ENCODE measurements at regions of chr17 and their contacts with region 1.

Region 1: DNA sequence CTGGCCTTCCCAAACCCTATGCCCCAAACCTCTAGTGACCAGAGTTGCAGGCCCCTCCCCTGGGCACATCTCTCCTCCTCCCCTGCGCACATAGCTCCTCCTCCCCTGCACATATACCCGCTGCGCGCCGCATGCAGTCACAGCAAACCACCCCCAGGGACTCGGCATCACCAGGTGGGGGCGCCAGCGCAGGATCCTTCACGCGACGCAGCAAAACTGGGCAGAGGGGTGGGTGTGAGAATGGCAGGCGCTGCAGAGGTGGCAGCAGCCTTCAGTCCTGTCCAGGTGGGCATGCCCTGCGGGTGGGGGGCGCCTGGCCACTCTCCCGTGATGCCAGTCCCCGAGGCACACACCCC is 5.6 kb downstream of the CORO6 start:
- DNase-seq: no peak
- ATAC-seq: peak; percentile 82
- H3K4me3 ChIP-seq: peak overlapping the region; percentile 67; the same call in 1 of the 2 replicates
- H3K27ac ChIP-seq: no peak overlapping the region; the same call in 1 of the 2 replicates
- H3K4me1 ChIP-seq: peaks cover 38% of the 10 kb centered on the region
- H3K27me3 ChIP-seq: peaks cover 4 to 6% of the 10 kb centered on the region in 2 experiments; a peak in 3 of 4 replicates
- CTCF ChIP-seq: peak; percentile 76 to 94 (median 93)
- EP300 ChIP-seq: no peak
- POLR2A ChIP-seq: peak; percentile 70
- RAD21 ChIP-seq: peak; percentile 47

Region 2: DNA sequence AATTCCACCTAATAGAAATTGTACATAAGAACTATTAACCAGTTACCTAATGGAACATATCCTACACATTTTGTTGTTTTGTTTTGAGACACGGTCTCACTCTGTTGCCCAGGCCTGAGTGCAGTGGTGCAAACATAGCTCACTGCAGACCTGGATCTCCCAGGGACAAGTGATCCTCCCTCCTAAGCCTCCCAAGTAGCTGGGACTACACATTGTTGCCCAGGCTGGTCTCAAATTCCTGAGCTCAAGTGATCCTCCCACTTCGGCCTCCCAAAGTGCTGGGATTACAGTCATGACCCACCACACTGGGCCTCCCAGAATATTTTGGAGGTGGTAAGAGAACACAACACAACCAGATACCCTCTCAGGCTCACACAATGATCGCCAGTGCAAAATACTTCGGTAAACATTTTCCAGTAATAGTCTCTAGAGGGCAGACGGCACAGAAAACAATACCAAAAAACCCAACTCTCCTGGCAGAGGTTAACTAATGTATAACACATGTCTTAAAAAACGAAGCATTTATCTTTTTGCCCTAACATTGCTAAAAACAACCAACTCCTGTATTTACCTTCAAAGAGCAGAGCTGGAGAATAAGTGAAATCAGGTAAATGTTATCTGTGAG is 333.7 kb before region 1 on chr17:
- CTCF ChIA-PET with region 1: no interaction called
- POLR2A ChIA-PET with region 1: no interaction called
- RAD21 ChIA-PET with region 1: no interaction called
- SMC1A ChIA-PET with region 1: no interaction called
- in situ Hi-C with region 1: no loop called
- intact Hi-C with region 1: no loop called
- DNase-seq: no peak
- ATAC-seq: peak; percentile 53
- H3K4me3 ChIP-seq: 0 out of 2 replicates have a peak overlapping the region, but pooled peaks have one; percentile 22
- H3K27ac ChIP-seq: no peak overlapping the region
- H3K4me1 ChIP-seq: no peaks in the 10 kb centered on the region
- H3K27me3 ChIP-seq: no peaks in the 10 kb centered on the region
- CTCF ChIP-seq: no peak
- EP300 ChIP-seq: no peak
- POLR2A ChIP-seq: no peak
- RAD21 ChIP-seq: no peak

Region 3: DNA sequence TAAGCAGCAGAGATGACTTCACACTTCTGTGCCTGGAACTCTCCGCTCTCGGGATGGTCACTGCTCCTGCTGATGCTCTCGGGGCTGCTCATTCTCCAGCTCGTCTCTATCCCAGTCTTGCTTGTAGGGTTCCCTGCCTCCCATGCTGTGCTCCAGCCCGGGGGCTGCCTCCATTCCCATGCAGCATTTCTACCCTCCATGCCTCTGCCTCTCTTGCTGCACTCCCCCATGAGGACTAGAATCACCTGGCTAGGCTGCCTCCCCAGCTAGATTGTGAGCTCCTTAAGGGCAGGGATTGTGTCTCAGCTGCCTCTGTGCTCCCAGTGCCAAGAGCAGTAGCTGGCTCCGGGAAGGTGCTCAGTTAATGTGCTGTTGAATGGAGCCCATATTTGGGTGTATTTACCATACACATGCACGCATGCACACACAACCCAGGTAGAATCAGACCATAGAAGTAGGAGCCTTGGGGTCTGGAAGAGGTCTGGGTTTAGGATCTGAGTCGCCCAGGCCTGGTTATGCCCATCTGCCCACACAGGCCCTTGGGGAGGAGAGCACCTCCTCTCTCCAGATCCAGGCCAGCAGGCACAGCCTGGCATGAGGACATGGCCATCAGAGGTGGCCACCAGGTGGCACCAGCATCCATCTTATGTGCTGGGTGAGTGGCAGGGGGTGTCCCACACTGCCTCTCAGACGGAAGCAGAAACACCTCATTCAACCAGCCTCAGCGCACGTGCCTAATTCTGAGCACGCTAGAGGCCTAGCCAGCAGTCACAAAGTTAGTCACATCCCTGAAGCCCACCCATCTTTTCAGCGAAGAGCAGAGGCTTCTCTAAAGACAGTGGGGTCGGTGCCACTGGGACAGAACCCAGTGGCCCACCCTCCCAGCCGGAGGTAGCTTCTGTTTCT is 37.0 kb before region 1 on chr17:
- CTCF ChIA-PET with region 1: interaction called, 82 read pairs
- POLR2A ChIA-PET with region 1: interaction called, 3 read pairs
- RAD21 ChIA-PET with region 1: interaction called, 25 read pairs
- SMC1A ChIA-PET with region 1: interaction called, 8 read pairs
- in situ Hi-C with region 1: no loop called
- intact Hi-C with region 1: loop called (anchors 1 kb)
- DNase-seq: no peak
- ATAC-seq: peak; percentile 100
- H3K4me3 ChIP-seq: no peak overlapping the region
- H3K27ac ChIP-seq: no peak overlapping the region; the same call in 1 of the 2 replicates
- H3K4me1 ChIP-seq: peaks cover 11% of the 10 kb centered on the region
- H3K27me3 ChIP-seq: no peaks in the 10 kb centered on the region
- CTCF ChIP-seq: peak; percentile 82 to 93 (median 89)
- EP300 ChIP-seq: no peak
- POLR2A ChIP-seq: no peak
- RAD21 ChIP-seq: peak; percentile 87

Region 4: DNA sequence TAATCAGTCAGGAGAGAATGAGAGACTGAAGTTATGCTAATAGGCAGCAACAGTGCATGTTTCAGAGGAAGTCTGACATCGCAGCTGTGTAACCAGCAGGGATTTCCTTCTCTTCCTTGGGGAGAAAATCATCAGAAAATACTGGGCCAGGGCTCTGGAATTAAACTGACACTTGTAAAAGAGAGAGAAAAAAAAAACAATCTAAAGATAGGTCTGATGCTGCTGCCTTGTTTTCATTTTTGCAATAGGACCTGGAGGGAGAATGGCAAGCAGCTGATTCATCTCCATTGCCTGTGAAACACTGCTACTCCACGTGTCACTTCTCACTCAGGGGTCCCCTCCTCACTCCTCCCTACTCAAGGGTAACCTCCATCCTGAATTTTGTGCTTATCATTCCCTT is 23.3 kb after region 1 on chr17:
- CTCF ChIA-PET with region 1: interaction called, 28 read pairs
- POLR2A ChIA-PET with region 1: interaction called, 5 read pairs
- RAD21 ChIA-PET with region 1: interaction called, 22 read pairs
- SMC1A ChIA-PET with region 1: interaction called, 5 read pairs
- in situ Hi-C with region 1: no loop called
- intact Hi-C with region 1: no loop called
- DNase-seq: no peak
- ATAC-seq: no peak
- H3K4me3 ChIP-seq: no peak overlapping the region
- H3K27ac ChIP-seq: no peak overlapping the region
- H3K4me1 ChIP-seq: peaks cover 3% of the 10 kb centered on the region
- H3K27me3 ChIP-seq: no peaks in the 10 kb centered on the region
- CTCF ChIP-seq: no peak
- EP300 ChIP-seq: no peak
- POLR2A ChIP-seq: no peak
- RAD21 ChIP-seq: no peak

Region 5: GRCh38 chr17:29705386-29705785 is 88.3 kb after region 1 on chr17:
- CTCF ChIA-PET with region 1: interaction called, 15 read pairs
- POLR2A ChIA-PET with region 1: no interaction called
- RAD21 ChIA-PET with region 1: interaction called, 13 read pairs
- SMC1A ChIA-PET with region 1: interaction called, 3 read pairs
- in situ Hi-C with region 1: no loop called
- intact Hi-C with region 1: no loop called
- DNase-seq: no peak
- ATAC-seq: peak; percentile 7; the same call in 2 of the 3 replicates
- H3K4me3 ChIP-seq: peak overlapping the region; percentile 43; the same call in 1 of the 2 replicates
- H3K27ac ChIP-seq: peak overlapping the region; percentile 91
- H3K4me1 ChIP-seq: peaks cover 29% of the 10 kb centered on the region
- H3K27me3 ChIP-seq: no peaks in the 10 kb centered on the region
- CTCF ChIP-seq: no peak
- EP300 ChIP-seq: no peak
- POLR2A ChIP-seq: no peak
- RAD21 ChIP-seq: no peak

Region 6: GRCh38 chr17:29760761-29761696 is 143.9 kb after region 1 on chr17:
- CTCF ChIA-PET with region 1: interaction called, 10 read pairs
- POLR2A ChIA-PET with region 1: no interaction called
- RAD21 ChIA-PET with region 1: interaction called, 5 read pairs
- SMC1A ChIA-PET with region 1: interaction called, 3 read pairs
- in situ Hi-C with region 1: no loop called
- intact Hi-C with region 1: no loop called
- DNase-seq: peak; percentile 55
- ATAC-seq: peak; percentile 92
- H3K4me3 ChIP-seq: peak overlapping the region; percentile 88
- H3K27ac ChIP-seq: peak overlapping the region; percentile 90
- H3K4me1 ChIP-seq: peaks cover 11% of the 10 kb centered on the region; the same call in 1 of the 2 replicates
- H3K27me3 ChIP-seq: no peaks in the 10 kb centered on the region
- CTCF ChIP-seq: no peak
- EP300 ChIP-seq: 0 out of 4 replicates have a peak, but pooled peaks of 1 of the 2 experiments have one; percentile 4
- POLR2A ChIP-seq: peak; percentile 91
- RAD21 ChIP-seq: no peak

Region 7: DNA sequence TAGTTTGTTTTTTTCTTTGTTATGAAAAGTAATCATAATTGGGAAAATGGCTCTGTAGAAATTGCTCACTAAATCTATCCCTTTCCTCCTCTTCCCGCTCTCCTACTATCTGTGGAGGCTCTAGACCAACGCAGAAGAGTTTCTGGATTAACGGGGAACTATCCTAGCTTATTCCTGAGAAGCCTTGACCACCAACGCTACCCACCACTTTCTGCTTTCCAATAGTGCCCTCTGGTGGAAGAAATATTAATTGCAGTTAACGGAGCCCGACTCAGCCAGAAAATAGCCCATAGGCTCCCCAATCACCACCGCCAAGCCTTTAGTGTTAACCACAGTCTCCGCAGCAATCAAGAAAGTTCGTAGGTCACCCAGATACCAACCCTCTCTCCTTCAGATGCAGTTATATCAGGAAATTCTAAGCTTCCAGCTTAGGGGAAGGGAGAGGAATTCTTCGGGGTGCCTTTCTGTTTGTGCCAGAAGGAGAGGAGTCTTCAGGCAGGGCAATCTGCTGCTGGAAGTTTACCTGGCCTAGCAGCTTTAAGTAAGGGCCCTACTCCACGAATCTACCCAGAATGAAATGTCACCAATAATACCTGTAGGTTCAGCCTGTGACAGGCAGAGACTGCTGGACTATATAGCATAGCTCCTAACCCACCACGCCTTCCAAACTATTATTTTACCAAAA is 476.5 kb after region 1 on chr17:
- CTCF ChIA-PET with region 1: interaction called, 10 read pairs
- POLR2A ChIA-PET with region 1: no interaction called
- RAD21 ChIA-PET with region 1: interaction called, 4 read pairs
- SMC1A ChIA-PET with region 1: no interaction called
- in situ Hi-C with region 1: no loop called
- intact Hi-C with region 1: no loop called
- DNase-seq: peak; percentile 32
- ATAC-seq: peak; percentile 88
- H3K4me3 ChIP-seq: no peak overlapping the region
- H3K27ac ChIP-seq: no peak overlapping the region
- H3K4me1 ChIP-seq: peaks cover 3% of the 10 kb centered on the region; the same call in 1 of the 2 replicates
- H3K27me3 ChIP-seq: no peaks in the 10 kb centered on the region; a peak in 1 of 4 replicates
- CTCF ChIP-seq: peak; percentile 63 to 82 (median 70); a peak in 5 of 6 replicates
- EP300 ChIP-seq: no peak
- POLR2A ChIP-seq: no peak
- RAD21 ChIP-seq: peak; percentile 88